Head of caudate nucleus (tissue), 42 donors: ENCODE measurements at regions of chr1 and their contacts with region 1.

Region 1: DNA sequence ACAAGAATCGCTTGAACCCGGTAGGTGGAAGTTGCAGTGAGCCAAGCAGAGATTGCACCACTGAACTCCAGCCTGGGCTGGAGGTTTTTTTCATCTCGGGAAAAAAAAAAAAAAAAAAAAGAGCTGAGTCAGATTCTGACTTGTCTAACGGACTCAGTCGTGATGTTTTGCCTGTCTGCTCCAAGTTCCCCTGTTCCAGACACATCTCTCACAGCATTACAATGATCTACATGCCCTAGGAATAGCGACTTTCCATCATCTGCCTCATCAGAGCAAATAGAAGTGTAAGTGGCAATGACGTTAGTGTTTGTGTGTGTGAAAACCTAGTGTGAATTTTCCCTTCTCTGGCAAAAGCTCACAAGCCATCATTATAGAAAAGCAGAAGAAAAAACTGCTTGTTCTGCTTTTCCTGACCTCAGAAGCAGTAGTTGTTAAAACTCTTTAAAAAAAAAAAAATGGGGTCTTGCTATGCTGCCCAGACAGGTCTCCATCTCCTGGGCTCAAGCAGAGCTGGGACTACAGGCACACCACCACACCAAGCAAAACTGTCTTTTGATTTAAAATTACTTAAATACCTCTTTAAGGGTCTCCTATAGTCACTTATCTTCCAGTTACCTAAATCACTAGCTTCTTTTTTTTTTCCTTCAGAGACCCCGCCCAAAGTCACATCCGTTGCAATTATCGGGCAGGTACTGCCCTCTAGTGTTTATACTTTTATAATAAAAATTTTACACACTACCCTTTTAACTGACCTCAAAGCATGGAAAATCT is 37.3 kb downstream of the PLEKHO1 start:
- DNase-seq: peak in 1 of 42 donors; percentile 13

Region 2: DNA sequence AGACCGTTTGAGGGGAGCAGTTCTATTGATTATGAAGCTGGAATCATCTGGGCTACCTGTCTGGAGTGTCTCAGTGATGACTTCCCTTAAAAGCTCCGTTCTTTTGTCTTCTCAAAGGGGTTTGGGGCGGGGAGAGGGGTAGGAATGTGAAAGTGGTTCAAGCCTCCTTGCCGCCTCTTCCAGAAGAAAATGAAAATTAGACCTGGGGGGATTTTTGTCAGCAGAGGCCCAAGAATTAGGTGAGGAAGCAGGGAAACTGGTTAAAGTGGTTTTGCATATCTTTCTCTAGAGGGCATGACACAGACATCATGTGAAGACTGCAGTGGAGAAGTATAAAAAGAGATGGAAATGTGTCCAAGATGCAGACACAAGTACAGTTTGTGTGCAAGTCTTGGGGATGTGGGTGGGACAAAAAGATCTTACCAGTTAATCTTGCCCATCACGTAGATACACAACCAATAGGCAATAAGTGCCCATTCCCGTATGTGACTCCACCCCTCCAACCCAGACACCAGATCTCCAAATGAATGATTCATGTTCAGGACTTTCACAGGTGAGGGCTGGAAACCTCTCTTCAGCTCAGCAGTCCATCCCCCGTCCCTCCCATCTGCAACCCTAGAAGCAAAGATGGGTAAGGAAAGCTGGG is 249.8 kb before region 1 on chr1:
- intact Hi-C with region 1: no loop called
- DNase-seq: peak in 5 of 42 donors; percentile 11 to 68 (median 20)

Region 3: DNA sequence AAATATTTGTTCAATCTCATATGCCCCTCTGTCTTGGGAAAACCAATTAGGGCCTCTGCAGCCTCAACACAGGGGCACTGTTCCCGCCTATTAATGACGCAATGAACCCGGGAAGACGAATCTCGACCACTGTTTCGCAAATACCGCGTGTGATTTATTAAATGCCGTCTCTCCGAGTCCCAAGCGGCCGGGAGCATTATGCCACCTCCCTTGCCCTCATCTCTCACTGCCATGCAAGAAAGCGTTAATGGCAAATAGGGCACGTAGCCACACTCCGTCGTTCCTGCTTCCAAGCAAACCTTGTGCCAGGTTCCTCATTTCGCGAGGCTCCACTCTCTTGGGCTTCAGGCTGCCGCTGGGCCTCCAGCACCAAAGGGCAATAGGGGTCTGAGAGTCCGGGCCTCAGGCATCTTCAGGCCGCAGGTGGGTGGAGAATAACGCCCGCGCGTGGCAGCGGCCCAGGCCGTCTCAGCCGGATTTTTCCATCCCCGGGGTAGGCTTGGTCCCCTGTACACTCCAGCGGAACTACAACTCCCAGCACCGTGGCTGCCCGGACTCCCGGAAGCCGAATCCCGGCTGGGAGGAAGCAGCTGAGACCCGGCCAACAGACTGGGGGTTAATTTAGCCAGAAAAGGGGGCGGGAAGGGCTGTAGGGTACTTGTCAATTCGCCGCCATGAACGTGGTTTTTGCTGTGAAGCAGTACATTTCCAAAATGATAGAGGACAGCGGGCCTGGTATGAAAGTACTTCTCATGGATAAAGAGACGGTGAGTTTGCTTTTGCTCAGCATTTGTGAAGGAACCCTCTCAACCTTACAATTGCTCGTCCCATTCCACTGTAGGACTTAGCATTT is 119.6 kb before region 1 on chr1 and contains the start of gene VPS45:
- intact Hi-C with region 1: loop called (anchors 10 kb)
- DNase-seq: peak; percentile 84 to 97 (median 94)

Region 4: DNA sequence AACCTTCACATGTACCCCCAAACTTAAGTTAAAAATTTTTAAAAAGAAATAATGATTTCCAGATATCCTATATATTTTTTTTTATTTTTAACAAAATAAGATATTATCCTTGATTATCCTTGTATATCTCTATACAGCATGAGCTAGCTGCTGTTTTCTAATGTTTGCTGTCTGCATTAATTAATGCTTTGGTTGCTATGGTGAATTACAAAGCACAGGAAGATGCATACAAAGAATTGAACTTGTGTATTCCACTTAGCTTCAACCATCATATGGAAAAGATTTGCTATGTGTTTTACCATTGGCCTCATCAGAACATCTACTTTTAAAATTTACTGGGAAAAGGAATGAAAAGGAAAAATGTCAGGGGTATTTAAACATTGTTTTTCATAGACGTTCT is 84.0 kb before region 1 on chr1:
- intact Hi-C with region 1: no loop called
- DNase-seq: no peak

Region 5: GRCh38 chr1:150118716-150119115 is 68.3 kb before region 1 on chr1:
- intact Hi-C with region 1: no loop called
- DNase-seq: no peak